Thyroid gland (tissue), 4 donors: ENCODE measurements at regions of chr3 and their contacts with region 1.

Region 1: GRCh38 chr3:143951351-143951971 is 20.2 kb upstream of the DIPK2A start:
- DNase-seq: peak in 1 of 2 donors; percentile 33
- H3K4me3 ChIP-seq: no peak overlapping the region
- H3K27ac ChIP-seq: no peak overlapping the region
- H3K4me1 ChIP-seq: no peaks in the 10 kb centered on the region
- H3K27me3 ChIP-seq: no peaks in the 10 kb centered on the region
- CTCF ChIP-seq: peak in 5 of 6 experiments; percentile 39 to 68 (median 60)
- POLR2A ChIP-seq: no peak

Region 2: DNA sequence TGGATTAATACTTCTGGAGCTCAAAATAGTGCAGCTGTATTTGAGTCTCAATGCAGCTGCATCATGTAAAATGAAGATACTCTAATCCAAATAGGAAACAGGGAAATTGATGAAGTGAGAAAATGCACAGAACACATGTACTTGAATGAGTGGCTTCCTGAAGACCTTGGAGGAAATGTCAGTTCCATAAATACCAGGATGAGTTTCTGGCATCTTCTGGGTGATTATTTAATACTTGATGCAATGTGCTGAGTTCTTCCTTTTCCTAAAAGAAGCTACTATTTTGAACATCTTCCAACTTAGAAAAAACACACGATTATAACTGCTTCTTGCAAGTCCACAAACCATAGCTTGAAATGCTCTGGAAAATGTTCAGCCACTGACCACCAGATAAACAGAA is 266.0 kb before region 1 on chr3:
- intact Hi-C with region 1: no loop called
- DNase-seq: no peak
- H3K4me3 ChIP-seq: no peak overlapping the region
- H3K27ac ChIP-seq: no peak overlapping the region
- H3K4me1 ChIP-seq: no peaks in the 10 kb centered on the region
- H3K27me3 ChIP-seq: no peaks in the 10 kb centered on the region
- CTCF ChIP-seq: no peak
- POLR2A ChIP-seq: no peak

Region 3: DNA sequence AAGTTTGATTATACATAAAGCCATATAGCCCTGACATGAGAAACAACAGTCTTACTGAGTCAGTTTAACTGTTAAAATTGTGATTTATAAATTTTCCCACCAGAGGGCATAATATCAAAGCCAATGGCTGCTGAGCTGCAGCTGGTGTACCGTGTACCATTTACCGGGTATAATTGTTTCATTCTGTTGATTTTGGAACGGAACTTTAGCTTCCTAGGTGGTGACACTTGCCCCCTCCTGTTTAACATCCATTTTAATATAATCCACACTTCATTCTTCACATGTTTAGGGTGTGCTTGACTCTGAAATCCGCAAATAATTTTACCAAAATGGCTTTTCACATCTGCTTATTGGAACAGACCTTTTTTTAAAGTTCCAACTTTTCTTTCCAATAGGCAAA is 176.0 kb before region 1 on chr3:
- intact Hi-C with region 1: loop called (anchors 10 kb)
- DNase-seq: peak in 1 of 2 donors; percentile 10
- H3K4me3 ChIP-seq: no peak overlapping the region
- H3K27ac ChIP-seq: no peak overlapping the region
- H3K4me1 ChIP-seq: no peaks in the 10 kb centered on the region
- H3K27me3 ChIP-seq: no peaks in the 10 kb centered on the region
- CTCF ChIP-seq: peak in 4 of 6 experiments; percentile 32 to 67 (median 60)
- POLR2A ChIP-seq: no peak